Endothelial cell of umbilical vein (primary cell): ENCODE measurements at regions of chr2 and their contacts with region 1.

Region 1: DNA sequence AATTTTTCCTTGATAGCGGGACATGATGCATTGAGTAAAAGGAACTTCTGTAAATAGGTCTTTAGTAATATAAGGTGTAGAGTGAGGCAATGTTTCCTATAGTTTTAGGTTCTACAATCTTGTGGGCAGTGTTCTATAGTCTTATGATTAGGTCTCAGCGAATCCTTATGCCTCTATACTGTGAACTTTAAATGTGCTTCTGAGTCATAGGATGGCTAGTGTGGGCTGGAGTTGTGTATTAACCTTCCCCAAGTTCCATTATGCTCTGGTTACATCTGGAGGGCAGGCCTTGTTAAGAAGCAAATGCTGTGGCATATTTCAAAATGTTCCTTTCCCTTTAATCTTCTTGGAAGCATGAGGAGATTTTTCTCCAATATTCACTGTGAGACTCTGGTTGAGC is 73.5 kb downstream of the ROCK2 start:
- DNase-seq: no peak
- H3K4me3 ChIP-seq: no peak overlapping the region
- H3K27ac ChIP-seq: no peak overlapping the region
- H3K4me1 ChIP-seq: no peaks in the 10 kb centered on the region
- H3K27me3 ChIP-seq: no peaks in the 10 kb centered on the region
- CTCF ChIP-seq: no peak
- POLR2A ChIP-seq: no peak

Region 2: GRCh38 chr2:11224887-11225286 is 46.0 kb before region 1 on chr2:
- CTCF ChIA-PET with region 1: no interaction called
- POLR2A ChIA-PET with region 1: no interaction called
- dilution Hi-C with region 1: no loop called
- intact Hi-C with region 1: no loop called
- DNase-seq: no peak
- H3K4me3 ChIP-seq: no peak overlapping the region
- H3K27ac ChIP-seq: no peak overlapping the region
- H3K4me1 ChIP-seq: peaks cover 9% of the 10 kb centered on the region
- H3K27me3 ChIP-seq: no peaks in the 10 kb centered on the region
- CTCF ChIP-seq: no peak
- POLR2A ChIP-seq: no peak

Region 3: GRCh38 chr2:11281186-11281585 is 10.3 kb after region 1 on chr2:
- CTCF ChIA-PET with region 1: no interaction called
- POLR2A ChIA-PET with region 1: no interaction called
- dilution Hi-C with region 1: no loop called
- intact Hi-C with region 1: loop called (anchors 1 kb)
- DNase-seq: peak; percentile 71
- H3K4me3 ChIP-seq: peak overlapping the region in 1 of 3 experiments; percentile 40
- H3K27ac ChIP-seq: peak overlapping the region; percentile 5
- H3K4me1 ChIP-seq: peaks cover 12% of the 10 kb centered on the region
- H3K27me3 ChIP-seq: no peaks in the 10 kb centered on the region
- CTCF ChIP-seq: no peak
- POLR2A ChIP-seq: no peak